ENCODE measurements at regions of chr9 and their contacts with region 1.

Region 1: DNA sequence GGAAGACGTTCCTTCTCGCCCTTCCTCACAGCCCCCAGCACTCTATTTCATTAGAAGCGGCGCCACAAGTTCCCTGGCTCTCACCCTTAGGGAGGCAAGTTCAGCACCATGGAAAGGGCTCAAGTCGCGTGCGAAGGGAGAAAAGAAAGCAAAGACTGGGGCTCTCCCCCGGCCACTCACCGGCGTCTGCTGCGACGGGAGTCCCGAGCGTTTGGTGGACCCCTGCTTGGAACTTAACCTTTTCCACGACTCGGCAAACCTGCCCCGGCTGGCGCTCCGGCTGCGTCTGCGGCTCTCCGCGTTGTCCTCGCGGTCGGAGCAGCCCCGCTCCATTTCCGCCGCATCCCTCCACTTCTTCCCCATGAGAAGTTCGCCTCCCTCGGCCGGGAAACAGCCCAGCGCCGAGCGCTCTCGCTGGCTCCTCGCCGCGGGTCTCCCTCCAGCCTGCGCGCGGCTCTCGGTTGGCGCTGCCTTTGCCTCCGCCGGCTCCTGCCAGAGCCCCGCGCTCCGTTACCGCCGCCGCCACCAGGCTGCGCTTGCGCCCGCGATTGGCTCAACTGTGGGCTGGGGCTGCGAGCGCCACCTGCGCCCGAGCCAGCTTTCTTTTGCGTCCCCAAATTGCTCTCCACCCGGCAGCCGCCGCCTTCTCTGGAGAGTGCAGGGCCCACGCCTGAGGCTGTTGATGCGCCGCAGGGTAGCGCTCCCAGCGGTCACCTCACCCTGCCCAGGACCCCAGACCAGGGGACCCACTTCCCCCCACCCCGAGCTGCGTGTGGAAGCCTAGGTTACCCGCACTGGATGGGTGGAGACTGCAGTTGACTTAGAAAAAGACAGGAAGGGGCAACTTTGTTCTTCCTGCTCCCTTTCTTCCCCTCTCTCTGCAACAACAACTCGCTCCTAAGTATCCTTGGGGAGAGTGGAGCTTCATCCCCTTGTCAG is 321.6 kb downstream of the CEMIP2 start:
- DNase-seq: peak; percentile 68
- H3K4me3 ChIP-seq: peak overlapping the region in 2 of 3 experiments; percentile 33 to 34
- H3K27ac ChIP-seq: no peak overlapping the region
- H3K4me1 ChIP-seq: no peaks in the 10 kb centered on the region
- H3K27me3 ChIP-seq: peaks cover 5 to 8% of the 10 kb centered on the region in 2 experiments
- CTCF ChIP-seq: peak in 1 of 2 donors; percentile 21
- POLR2A ChIP-seq: no peak

Region 2: DNA sequence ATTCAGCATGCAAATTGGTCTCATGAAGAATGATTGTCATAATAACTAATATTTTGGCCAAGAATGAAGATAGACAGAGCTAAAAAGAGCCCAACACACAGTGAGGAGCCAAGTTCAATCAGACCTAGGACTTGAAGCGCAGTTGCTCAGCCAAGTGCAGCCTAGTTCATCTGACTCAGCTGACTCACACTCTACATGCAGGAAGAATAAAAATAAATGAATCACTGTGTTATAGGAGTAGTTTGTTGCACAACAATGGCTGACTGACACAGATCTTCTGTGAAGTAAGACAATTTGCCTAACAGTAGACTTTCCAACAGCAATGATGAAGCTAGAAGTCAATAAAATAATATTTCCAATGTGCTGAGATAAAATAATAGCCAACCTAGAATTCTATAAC is 60.1 kb after region 1 on chr9:
- CTCF ChIA-PET with region 1: no interaction called
- POLR2A ChIA-PET with region 1: no interaction called
- dilution Hi-C with region 1: no loop called
- intact Hi-C with region 1: loop called (anchors 10 kb)
- DNase-seq: no peak
- H3K4me3 ChIP-seq: no peak overlapping the region
- H3K27ac ChIP-seq: no peak overlapping the region
- H3K4me1 ChIP-seq: no peaks in the 10 kb centered on the region
- H3K27me3 ChIP-seq: no peaks in the 10 kb centered on the region
- CTCF ChIP-seq: no peak
- POLR2A ChIP-seq: no peak

Measured in endothelial cell of umbilical vein (primary cell).